ENCODE measurements at regions of chr16 and their contacts with region 1.

Region 1: GRCh38 chr16:67428146-67428731 is 2.7 kb upstream of the HSD11B2 start:
- DNase-seq: peak; percentile 43 to 61 (median 58)
- H3K4me3 ChIP-seq: no peak overlapping the region
- H3K4me3 Mint-ChIP-seq: peak overlapping the region in 1 of 2 donors; percentile 76
- H3K27ac ChIP-seq: no peak overlapping the region
- H3K27ac Mint-ChIP-seq: no peak overlapping the region
- H3K4me1 ChIP-seq: peaks cover 14 to 18% of the 10 kb centered on the region in 2 donors
- H3K4me1 Mint-ChIP-seq: peaks cover 16% of the 10 kb centered on the region
- H3K27me3 ChIP-seq: peaks cover 22 to 62% of the 10 kb centered on the region in 2 donors
- H3K27me3 Mint-ChIP-seq: peaks cover 56 to 77% (median 58%) of the 10 kb centered on the region in 3 donors
- CTCF ChIP-seq: peak; percentile 87

Region 2: GRCh38 chr16:67464565-67464964 is 36.3 kb after region 1 on chr16:
- intact Hi-C with region 1: loop called (anchors 2 to 5 kb)
- DNase-seq: no peak
- H3K4me3 ChIP-seq: no peak overlapping the region
- H3K4me3 Mint-ChIP-seq: no peak overlapping the region
- H3K27ac ChIP-seq: peak overlapping the region in 1 of 2 donors; percentile 48
- H3K27ac Mint-ChIP-seq: peak overlapping the region in 2 of 7 donors; percentile 37 to 83
- H3K4me1 ChIP-seq: peaks cover 29 to 56% of the 10 kb centered on the region in 2 donors
- H3K4me1 Mint-ChIP-seq: peaks cover 73% of the 10 kb centered on the region
- H3K27me3 ChIP-seq: no peaks in the 10 kb centered on the region
- H3K27me3 Mint-ChIP-seq: no peaks in the 10 kb centered on the region
- CTCF ChIP-seq: no peak

Region 3: GRCh38 chr16:67470359-67470758 is 42.1 kb after region 1 on chr16:
- intact Hi-C with region 1: loop called (anchors 2 to 5 kb)
- DNase-seq: no peak
- H3K4me3 ChIP-seq: no peak overlapping the region
- H3K4me3 Mint-ChIP-seq: no peak overlapping the region
- H3K27ac ChIP-seq: peak overlapping the region; percentile 2 to 51
- H3K27ac Mint-ChIP-seq: peak overlapping the region in 6 of 7 donors; percentile 6 to 86 (median 40)
- H3K4me1 ChIP-seq: peaks cover 61 to 84% of the 10 kb centered on the region in 2 donors
- H3K4me1 Mint-ChIP-seq: peaks cover 91% of the 10 kb centered on the region
- H3K27me3 ChIP-seq: no peaks in the 10 kb centered on the region
- H3K27me3 Mint-ChIP-seq: no peaks in the 10 kb centered on the region
- CTCF ChIP-seq: no peak